ENCODE measurements at regions of chr7 and their contacts with region 1.

Region 1: GRCh38 chr7:135662373-135663114 is at the start of gene STMP1:
- DNase-seq: peak; percentile 82
- H3K4me3 ChIP-seq: peak within 1 kb of the TSS; percentile 95
- CTCF ChIP-seq: peak; percentile 89

Region 2: DNA sequence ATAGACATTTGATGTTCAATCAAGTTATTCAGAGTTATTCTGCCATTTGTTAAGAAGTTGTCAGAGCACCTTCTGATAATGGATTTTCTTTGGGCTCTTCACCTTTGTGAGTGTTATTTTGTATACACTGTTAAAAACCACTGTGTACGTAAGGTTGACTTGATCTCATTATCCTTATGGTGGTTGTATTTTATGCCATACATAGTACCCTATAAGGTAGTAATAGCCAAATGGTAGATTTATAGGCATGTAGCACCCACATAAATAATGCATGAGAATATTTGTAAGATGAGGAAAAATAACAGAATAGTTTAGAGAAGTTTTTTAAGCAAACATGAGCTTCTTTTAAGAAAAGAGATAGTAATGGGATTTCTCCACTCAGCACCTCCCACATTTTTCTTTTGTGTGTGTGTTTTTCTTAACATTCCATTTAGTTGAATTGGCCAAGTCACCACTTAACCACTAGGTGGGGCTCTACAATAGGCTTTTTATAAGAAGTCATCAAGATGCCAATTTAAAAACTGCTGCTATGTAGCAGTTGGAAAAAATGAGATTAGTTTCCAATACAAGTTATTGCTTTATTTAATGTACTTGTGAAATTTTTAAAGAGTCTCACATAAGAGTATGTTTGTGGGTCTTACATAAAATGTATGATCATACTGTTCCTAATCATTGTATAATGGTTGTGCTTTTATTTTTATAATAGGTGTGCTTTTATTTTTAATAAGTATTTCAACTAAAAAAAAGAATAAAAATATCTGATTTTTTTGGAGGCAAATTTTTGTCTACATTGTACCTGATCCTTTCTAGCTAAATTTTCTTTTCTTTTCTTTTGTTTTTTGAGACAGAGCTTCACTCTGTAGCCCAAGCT is 41.3 kb before region 1 on chr7:
- CTCF ChIA-PET with region 1: interaction called, 13 read pairs
- POLR2A ChIA-PET with region 1: interaction called, 5 read pairs
- DNase-seq: peak; percentile 78
- H3K4me3 ChIP-seq: no peak overlapping the region
- CTCF ChIP-seq: peak; percentile 48

Region 3: GRCh38 chr7:135672560-135673359 is 10.2 kb after region 1 on chr7:
- CTCF ChIA-PET with region 1: interaction called, 89 read pairs
- POLR2A ChIA-PET with region 1: interaction called, 5 read pairs
- DNase-seq: peak; percentile 31
- H3K4me3 ChIP-seq: no peak overlapping the region
- CTCF ChIP-seq: peak; percentile 74

Region 4: DNA sequence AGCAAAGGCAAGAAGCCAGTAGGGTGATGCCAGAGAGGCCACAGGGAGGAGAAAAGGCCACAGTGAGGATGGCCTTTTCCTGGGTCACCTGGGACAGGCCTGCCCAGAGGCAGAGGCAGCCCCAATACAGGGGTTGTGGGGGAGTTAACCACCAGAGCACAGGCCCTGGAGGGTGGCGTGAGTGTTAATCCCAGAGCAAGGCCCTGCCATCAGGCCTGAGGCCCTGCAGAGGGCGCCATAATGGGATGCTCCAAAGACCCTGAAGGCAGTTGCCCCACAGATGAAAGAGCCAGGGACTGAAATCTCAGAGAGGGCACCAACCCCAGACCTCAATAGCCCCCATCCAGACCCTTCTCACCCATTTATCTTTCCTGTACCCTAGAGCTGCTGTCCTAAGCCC is 41.5 kb after region 1 on chr7:
- CTCF ChIA-PET with region 1: no interaction called
- POLR2A ChIA-PET with region 1: no interaction called
- DNase-seq: no peak
- H3K4me3 ChIP-seq: no peak overlapping the region
- CTCF ChIP-seq: peak; percentile 5

Region 5: DNA sequence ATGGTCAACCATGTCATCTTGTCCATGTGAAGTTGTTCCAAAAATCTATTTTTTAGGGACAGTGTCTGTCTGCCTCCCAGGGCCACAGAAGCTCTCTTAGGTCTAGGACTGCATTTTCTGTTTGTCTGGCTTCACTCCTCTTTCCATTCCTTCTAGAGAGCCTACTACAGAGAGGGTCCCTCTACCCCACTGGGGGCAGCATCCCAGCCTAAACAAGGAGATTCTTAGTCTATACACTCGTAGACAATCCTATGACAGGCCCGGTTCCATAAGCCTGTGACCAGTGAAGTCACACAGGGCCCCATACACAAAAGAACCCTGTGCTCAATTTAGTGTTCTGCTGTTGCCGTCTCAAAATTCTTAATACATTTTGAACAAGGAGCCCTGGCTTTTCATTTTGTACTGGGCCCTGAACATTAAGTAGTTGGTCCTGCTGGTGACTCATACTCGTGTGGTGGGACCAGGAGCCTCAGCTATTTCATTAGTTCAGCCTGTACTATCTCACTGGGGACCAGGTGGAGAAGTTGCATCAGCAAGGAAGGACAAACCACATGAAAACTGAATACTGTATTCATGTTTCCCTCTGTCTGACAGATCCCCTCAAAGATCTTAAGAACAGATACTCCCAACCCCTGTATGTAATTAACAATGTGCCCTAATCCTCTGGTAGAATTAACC is 109.6 kb after region 1 on chr7:
- CTCF ChIA-PET with region 1: interaction called, 16 read pairs
- POLR2A ChIA-PET with region 1: no interaction called
- DNase-seq: no peak
- H3K4me3 ChIP-seq: no peak overlapping the region
- CTCF ChIP-seq: no peak

Region 6: GRCh38 chr7:136009488-136010079 is 347.0 kb after region 1 on chr7:
- CTCF ChIA-PET with region 1: interaction called, 23 read pairs
- POLR2A ChIA-PET with region 1: no interaction called
- DNase-seq: no peak
- H3K4me3 ChIP-seq: no peak overlapping the region
- CTCF ChIP-seq: peak; percentile 39